ENCODE measurements at regions of chr6 and their contacts with region 1.

Region 1: DNA sequence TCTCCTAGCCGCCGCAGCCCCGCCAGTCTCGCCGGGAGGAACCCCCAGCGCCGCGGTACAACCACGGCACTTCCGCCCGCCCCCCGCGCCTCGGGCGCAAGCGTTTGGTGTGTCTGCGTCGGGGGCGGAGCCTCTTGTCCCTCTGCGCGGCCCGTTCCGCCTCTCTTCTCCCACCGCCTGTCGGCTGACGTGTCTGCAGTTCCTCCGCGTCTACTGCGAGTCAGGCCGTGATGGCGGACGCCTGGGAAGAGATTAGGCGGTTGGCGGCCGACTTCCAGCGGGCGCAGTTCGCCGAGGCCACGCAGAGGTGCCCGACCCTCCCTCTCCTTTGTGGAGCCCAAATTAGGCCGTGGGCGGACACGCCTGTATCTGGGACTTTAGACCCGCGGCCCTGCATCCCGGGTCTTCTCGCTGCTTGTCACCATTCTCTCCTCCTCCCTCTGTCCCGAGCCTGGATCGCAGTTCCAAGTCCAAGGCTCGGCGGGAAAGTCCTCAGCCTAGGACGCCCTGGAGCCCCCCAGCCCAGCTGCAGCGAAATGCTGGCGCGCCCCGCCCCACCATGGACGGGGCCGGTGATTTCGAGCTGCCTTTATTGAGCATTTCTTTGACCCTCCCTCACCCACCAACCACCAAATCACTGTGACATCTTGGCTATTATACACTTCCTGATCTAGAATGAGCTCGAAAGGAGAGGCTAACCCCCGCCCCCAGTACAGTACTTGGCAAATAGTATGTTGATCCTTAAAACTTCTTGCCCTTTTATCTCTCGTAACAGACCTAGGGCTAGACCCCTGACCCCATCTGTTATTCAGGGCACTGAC is at the start of gene UFL1:
- DNase-seq: peak; percentile 89 to 90
- H3K4me3 ChIP-seq: peak within 1 kb of the TSS; percentile 72
- H3K27ac ChIP-seq: peak within 1 kb of the TSS; percentile 94
- H3K4me1 ChIP-seq: peaks cover 35% of the 10 kb centered on the region
- H3K27me3 ChIP-seq: no peaks in the 10 kb centered on the region
- CTCF ChIP-seq: no peak
- total RNA-seq, gene UFL1: 19.3 and 25.3 TPM in 2 replicates

Region 2: DNA sequence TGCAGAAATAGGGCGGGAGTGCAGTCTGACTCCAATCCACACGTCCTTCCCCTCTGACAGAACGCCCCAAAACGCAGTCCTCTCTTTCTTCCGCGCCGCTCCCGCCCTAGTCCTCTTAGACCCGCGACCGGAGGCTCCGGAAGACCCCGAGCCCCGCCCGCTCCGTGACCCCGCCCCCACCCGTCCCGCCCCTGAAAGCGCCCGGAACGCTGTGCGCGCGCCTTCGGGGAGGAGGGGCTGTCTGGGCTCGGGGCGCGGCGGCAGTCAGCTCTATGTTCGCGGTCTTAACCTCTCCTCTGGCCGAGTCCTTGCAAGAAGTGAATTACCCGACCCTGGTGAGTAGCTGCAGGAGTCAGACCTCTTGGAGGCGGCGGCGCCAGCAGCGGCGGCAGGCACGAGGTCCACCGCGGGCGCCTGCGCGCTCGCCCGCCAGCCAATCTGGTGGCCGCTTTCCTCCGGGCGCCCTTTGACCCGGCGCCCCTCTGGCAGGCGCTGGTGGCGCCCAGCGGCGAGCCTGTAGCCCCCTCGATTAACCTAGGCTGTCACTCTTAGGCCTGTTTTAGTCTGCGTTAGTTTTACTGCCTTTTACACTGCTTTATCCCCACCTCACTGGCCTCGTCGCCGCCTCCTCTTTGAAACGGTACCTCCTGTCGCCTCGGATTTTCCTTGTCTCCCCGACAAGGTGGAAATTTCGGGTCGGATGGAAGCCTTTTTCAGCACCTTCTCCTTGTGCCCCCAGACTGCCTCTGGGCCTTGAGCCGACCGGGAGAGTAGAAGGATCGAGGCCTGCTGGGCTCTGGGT is 944.3 kb before region 1 on chr6 and contains the start of gene MANEA:
- CTCF ChIA-PET with region 1: no interaction called
- POLR2A ChIA-PET with region 1: no interaction called
- intact Hi-C with region 1: loop called (anchors 5 kb)
- DNase-seq: peak; percentile 70 to 78
- H3K4me3 ChIP-seq: peak within 1 kb of the TSS; percentile 96
- H3K27ac ChIP-seq: peak within 1 kb of the TSS; percentile 65
- H3K4me1 ChIP-seq: peaks cover 29% of the 10 kb centered on the region
- H3K27me3 ChIP-seq: no peaks in the 10 kb centered on the region
- CTCF ChIP-seq: no peak
- total RNA-seq, gene MANEA: 7.2 and 11.0 TPM in 2 replicates

Region 3: DNA sequence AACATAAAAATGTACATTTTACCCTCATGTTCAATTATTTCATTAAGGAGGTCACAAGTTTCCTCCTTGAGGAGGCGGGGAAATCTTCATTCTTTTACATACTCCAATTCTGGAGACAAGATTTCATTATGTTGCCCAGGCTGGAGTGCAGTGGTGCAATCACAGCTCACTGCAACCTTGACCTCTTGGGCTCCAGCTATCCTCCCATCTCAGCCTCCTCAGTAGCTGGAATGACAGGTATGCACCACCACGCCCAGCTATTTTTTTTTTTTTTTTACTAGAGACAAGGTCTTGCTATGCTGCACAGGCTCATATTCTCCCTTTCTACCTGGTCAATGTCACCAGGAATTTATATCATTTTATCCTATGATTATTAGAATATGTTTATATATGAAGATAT is 420.3 kb before region 1 on chr6:
- CTCF ChIA-PET with region 1: no interaction called
- POLR2A ChIA-PET with region 1: interaction called, 6 read pairs
- intact Hi-C with region 1: loop called (anchors 2 kb)
- DNase-seq: peak in 1 of 2 experiments; percentile 11
- H3K4me3 ChIP-seq: no peak overlapping the region
- H3K27ac ChIP-seq: no peak overlapping the region
- H3K4me1 ChIP-seq: peaks cover 31% of the 10 kb centered on the region
- H3K27me3 ChIP-seq: no peaks in the 10 kb centered on the region
- CTCF ChIP-seq: no peak

Region 4: GRCh38 chr6:96194675-96195074 is 327.2 kb before region 1 on chr6:
- CTCF ChIA-PET with region 1: no interaction called
- POLR2A ChIA-PET with region 1: no interaction called
- intact Hi-C with region 1: loop called (anchors 2 kb)
- DNase-seq: no peak
- H3K4me3 ChIP-seq: no peak overlapping the region
- H3K27ac ChIP-seq: no peak overlapping the region
- H3K4me1 ChIP-seq: peaks cover 22% of the 10 kb centered on the region
- H3K27me3 ChIP-seq: no peaks in the 10 kb centered on the region
- CTCF ChIP-seq: no peak

Region 5: GRCh38 chr6:96391776-96392360 is 130.0 kb before region 1 on chr6:
- CTCF ChIA-PET with region 1: no interaction called
- POLR2A ChIA-PET with region 1: interaction called, 4 read pairs
- intact Hi-C with region 1: loop called (anchors 10 kb)
- DNase-seq: no peak
- H3K4me3 ChIP-seq: no peak overlapping the region
- H3K27ac ChIP-seq: no peak overlapping the region
- H3K4me1 ChIP-seq: no peaks in the 10 kb centered on the region
- H3K27me3 ChIP-seq: no peaks in the 10 kb centered on the region
- CTCF ChIP-seq: no peak

Region 6: DNA sequence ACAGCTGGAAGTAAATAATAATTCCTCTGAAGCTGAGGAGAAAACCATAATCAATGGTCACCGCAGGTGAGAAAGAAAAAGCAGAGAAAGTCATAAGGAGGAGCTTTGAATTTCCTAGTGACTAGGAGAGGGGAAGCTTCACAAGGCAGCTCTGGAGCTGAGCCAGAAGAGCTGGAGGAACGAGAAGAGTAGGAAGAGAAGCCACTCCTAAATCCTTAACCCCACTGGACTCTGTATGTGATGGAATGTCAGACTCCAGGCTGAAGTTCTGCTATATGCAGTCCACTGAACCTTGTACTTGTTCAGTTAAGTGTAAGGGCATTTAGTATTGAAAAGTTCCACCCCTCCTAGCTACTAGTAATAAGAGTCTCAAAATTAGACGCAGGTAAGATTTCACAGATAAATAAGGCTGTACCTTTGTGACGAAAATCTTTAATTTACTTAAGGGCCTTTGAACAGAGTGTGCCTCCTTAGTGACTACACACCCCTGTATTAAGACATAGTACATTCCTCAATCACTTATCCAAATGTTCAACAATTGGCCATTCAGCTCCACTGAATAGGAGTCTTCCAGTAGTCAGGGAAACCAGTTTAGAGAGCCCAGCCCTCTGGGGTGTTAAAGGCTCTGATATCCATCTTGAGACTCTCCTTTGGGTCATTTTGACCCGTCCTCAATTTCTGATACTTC is 71.6 kb before region 1 on chr6:
- CTCF ChIA-PET with region 1: no interaction called
- POLR2A ChIA-PET with region 1: no interaction called
- intact Hi-C with region 1: loop called (anchors 5 kb)
- DNase-seq: peak; percentile 33 to 43
- H3K4me3 ChIP-seq: no peak overlapping the region
- H3K27ac ChIP-seq: no peak overlapping the region
- H3K4me1 ChIP-seq: peaks cover 5% of the 10 kb centered on the region
- H3K27me3 ChIP-seq: no peaks in the 10 kb centered on the region
- CTCF ChIP-seq: no peak

Region 7: GRCh38 chr6:96532399-96532798 is 10.5 kb after region 1 on chr6:
- CTCF ChIA-PET with region 1: no interaction called
- POLR2A ChIA-PET with region 1: interaction called, 11 read pairs
- intact Hi-C with region 1: no loop called
- DNase-seq: no peak
- H3K4me3 ChIP-seq: no peak overlapping the region
- H3K27ac ChIP-seq: no peak overlapping the region
- H3K4me1 ChIP-seq: no peaks in the 10 kb centered on the region
- H3K27me3 ChIP-seq: no peaks in the 10 kb centered on the region
- CTCF ChIP-seq: no peak